Motor neuron (in vitro differentiated cells): ENCODE measurements at regions of chr12 and their contacts with region 1.

Region 1: GRCh38 chr12:24979976-24980725 is 31.2 kb upstream of the BCAT1 start:
- ATAC-seq: peak in 2 of 8 experiments; percentile 31 to 66
- H3K4me3 ChIP-seq: no peak overlapping the region
- H3K27ac ChIP-seq: no peak overlapping the region
- H3K4me1 ChIP-seq: peaks cover 5 to 9% of the 10 kb centered on the region in 2 donors

Region 2: GRCh38 chr12:25121916-25122315 is 141.8 kb after region 1 on chr12:
- in situ Hi-C with region 1: loop called in 3 of 9 experiments (anchors 10 to 25 kb)
- ATAC-seq: no peak
- H3K4me3 ChIP-seq: no peak overlapping the region
- H3K27ac ChIP-seq: no peak overlapping the region
- H3K4me1 ChIP-seq: no peaks in the 10 kb centered on the region